ENCODE measurements at regions of chr3 and their contacts with region 1.

Region 1: DNA sequence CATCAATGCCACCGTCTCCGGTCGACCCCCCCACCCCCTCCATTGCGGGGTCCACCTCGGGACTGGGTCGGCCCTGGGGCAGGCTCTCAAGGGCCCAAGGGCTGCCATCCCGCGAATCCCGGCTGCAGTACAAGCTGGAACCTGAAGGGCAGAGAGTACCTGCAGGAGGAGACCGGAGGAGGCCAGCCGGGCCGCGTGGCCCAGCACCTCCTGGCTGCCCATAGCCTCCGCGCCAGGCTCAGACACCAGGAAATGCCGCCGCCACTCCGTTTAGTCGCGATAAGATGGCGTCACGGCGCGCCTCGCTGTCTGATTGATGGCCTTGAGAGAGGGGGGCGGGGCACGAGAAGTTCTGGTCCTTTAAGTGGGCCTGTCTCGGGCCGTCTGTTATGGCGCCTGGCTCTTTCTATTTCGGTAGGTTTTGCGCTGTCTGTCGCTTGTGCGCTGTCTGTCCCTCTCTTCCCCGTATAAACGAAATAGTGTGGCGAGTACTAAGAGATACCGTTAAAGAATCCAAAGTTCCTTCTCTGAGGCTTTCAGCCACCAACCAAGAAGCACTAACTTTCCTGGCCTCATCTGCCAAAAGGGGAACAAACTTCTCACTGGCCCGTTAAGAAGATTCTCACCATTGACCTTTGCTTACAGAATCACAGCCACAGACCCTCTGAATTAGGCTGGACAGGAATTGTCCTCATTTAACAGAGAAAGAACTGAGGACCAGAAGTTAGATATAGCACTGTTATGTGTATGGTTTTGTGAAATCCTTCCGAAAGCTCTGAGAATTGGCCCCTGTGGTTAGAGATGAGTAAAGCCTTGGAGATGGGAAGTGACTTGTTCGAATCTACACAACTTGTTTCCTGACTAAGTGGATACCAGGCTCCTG is at the start of gene RFT1:
- DNase-seq: peak; percentile 94 to 98 (median 96)
- ATAC-seq: peak; percentile 97
- H3K4me3 ChIP-seq: peak within 1 kb of the TSS; percentile 62
- H3K4me3 Mint-ChIP-seq: peak within 1 kb of the TSS; percentile 87 to 98 (median 92)
- H3K27ac ChIP-seq: peak within 1 kb of the TSS; percentile 82
- H3K27ac Mint-ChIP-seq: peak within 1 kb of the TSS; percentile 91 to 100 (median 98)
- H3K4me1 ChIP-seq: peaks cover 15 to 19% of the 10 kb centered on the region in 2 donors
- H3K4me1 Mint-ChIP-seq: peaks cover 14 to 39% (median 26%) of the 10 kb centered on the region in 7 donors
- H3K27me3 ChIP-seq: no peaks in the 10 kb centered on the region
- H3K27me3 Mint-ChIP-seq: no peaks in the 10 kb centered on the region
- total RNA-seq, gene RFT1: 16.0 to 32.0 (median 26.0) TPM

Region 2: DNA sequence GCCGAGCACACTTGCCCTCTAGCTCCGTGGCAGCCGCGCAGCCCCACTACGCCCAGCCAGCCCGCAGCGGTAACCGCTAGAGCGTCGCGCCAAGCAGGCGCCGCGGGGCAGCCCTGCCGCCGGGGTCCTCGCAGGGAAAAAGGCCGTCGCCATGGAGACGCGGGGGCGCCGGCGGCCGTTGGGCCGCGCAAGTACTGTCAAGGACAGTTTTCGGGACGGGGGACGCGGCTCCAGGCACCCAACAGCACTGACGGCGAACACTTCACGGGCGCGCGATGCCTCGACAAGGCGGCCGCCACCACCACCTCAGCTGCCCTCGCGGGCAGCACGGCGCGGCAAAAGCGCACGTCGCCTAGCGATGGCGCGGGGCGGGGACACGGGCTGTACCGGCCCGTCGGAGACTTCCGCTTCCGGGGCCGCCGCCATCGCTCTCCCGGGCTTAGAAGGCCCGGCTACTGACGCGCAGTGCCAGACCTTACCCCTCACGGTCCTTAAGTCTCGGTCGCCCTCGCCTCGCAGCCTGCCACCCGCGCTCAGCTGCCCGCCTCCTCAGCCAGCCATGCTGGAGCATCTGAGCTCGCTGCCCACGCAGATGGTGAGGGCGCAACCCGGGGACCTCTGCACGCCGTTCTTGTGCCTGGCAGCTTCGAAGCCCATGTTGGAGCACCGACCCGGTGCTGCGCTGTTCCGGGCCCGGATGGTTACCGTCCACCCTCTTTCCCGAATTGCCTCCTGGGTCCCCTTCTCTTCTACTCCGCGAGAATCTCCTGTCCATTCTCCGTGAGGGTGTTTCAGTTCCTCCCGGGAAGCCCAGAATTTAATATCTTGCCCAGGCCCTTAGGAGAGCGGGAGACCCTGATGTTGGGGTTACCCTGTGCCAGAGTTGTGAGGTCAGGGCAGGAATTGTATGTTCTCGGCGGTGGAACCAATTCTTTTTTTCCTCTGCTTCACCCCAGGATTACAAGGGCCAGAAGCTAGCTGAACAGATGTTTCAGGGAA is 424.4 kb before region 1 on chr3 and contains the starts of genes GLT8D1 and SPCS1:
- CTCF ChIA-PET with region 1: no interaction called
- POLR2A ChIA-PET with region 1: no interaction called
- intact Hi-C with region 1: loop called in 1 of 2 experiments (anchors 1 kb)
- DNase-seq: peak; percentile 83 to 96 (median 91)
- ATAC-seq: peak; percentile 94
- H3K4me3 ChIP-seq: peak within 1 kb of the TSS; percentile 97
- H3K4me3 Mint-ChIP-seq: peak within 1 kb of the TSS; percentile 89 to 96 (median 94)
- H3K27ac ChIP-seq: peak within 1 kb of the TSS; percentile 93
- H3K27ac Mint-ChIP-seq: peak within 1 kb of the TSS; percentile 90 to 97 (median 95)
- H3K4me1 ChIP-seq: peaks cover 25 to 33% of the 10 kb centered on the region in 2 donors
- H3K4me1 Mint-ChIP-seq: peaks cover 21 to 46% (median 40%) of the 10 kb centered on the region in 7 donors
- H3K27me3 ChIP-seq: no peaks in the 10 kb centered on the region
- H3K27me3 Mint-ChIP-seq: no peaks in the 10 kb centered on the region
- total RNA-seq, gene GLT8D1: 18.9 to 47.7 (median 45.2) TPM
- total RNA-seq, gene SPCS1: 55.0 to 95.3 (median 78.2) TPM

Region 3: DNA sequence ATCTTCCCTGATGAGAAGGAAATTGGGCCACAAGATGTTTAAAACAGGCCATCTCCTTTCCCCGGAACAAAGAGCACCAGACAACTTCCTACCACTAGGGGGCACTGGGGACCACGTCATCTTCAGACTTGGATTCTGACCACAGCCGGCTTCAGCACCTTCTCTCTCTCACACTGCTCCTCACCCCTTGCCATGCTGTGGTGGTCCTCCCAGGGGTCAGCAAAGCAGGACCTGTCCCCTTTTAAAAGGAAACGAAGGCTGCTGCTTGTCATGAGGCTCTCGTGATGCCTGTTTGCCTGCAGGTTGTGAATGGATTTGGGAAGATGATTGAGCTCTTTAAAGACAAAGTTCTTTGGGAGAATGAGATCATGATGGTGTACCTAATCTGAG is 16.4 kb before region 1 on chr3:
- CTCF ChIA-PET with region 1: interaction called, 11 read pairs
- POLR2A ChIA-PET with region 1: interaction called, 4 read pairs
- intact Hi-C with region 1: loop called (anchors 1 kb)
- DNase-seq: peak; percentile 53 to 86 (median 77)
- ATAC-seq: peak; percentile 83
- H3K4me3 ChIP-seq: no peak overlapping the region
- H3K4me3 Mint-ChIP-seq: no peak overlapping the region
- H3K27ac ChIP-seq: no peak overlapping the region
- H3K27ac Mint-ChIP-seq: no peak overlapping the region
- H3K4me1 ChIP-seq: peaks cover 0 to 8% of the 10 kb centered on the region in 2 donors
- H3K4me1 Mint-ChIP-seq: peaks cover 10 to 23% (median 17%) of the 10 kb centered on the region in 7 donors
- H3K27me3 ChIP-seq: no peaks in the 10 kb centered on the region
- H3K27me3 Mint-ChIP-seq: no peaks in the 10 kb centered on the region

Region 4: DNA sequence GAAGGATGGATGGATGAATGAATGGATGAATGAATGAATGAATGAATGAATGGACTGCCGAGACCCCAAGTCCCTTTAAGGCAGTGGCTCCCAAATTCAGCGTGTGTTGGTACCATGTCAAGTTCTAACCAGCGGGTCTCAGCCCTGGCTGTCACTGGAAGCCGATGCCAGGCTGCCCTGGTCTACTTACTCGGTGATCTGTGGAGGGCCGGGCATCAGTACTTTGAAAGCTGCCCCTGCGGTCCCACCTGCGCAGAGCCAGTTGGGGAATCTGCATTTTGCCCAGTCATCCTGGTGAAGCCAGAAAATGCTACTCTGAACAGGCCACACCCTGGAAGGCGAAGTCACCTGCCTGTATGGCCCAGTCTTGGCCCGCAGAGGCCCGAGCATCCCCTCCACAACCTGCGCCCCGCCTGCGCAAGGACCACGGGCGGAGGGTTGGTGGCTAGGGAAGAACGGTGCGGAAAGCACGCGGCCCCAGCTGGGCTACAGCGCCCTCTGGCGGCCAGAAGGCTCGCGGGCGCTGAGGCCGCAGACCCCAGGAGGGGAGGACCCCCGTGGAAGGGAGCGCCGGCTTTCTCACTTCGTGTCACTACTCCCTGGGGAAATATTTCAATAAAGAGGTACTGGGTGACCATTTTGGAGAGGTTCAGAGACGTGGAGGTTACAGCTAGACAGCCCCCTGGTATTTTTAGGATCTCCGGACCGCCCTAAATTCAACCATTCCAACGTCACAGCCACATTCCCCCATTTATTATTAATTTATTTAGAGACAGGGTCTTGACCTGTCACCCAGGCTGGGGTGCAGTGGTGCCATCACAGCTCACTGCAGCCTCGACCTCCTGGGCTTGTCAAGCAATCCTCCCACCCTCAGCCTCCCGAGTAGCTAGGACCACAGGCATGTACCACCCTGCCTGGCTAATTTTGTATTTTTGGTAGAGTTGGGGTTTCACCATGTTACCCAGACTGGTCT is 65.5 kb after region 1 on chr3:
- CTCF ChIA-PET with region 1: interaction called, 21 read pairs
- POLR2A ChIA-PET with region 1: interaction called, 3 read pairs
- intact Hi-C with region 1: loop called (anchors 1 kb)
- DNase-seq: peak; percentile 21 to 75 (median 55)
- ATAC-seq: peak; percentile 79
- H3K4me3 ChIP-seq: no peak overlapping the region
- H3K4me3 Mint-ChIP-seq: peak overlapping the region in 4 of 10 donors; percentile 6 to 62 (median 38)
- H3K27ac ChIP-seq: no peak overlapping the region
- H3K27ac Mint-ChIP-seq: peak overlapping the region in 1 of 9 donors; percentile 27
- H3K4me1 ChIP-seq: peaks cover 0 to 4% of the 10 kb centered on the region in 2 donors
- H3K4me1 Mint-ChIP-seq: peaks cover 5 to 12% (median 7%) of the 10 kb centered on the region in 7 donors
- H3K27me3 ChIP-seq: no peaks in the 10 kb centered on the region
- H3K27me3 Mint-ChIP-seq: peaks cover 0 to 6% (median 0%) of the 10 kb centered on the region in 5 donors

Region 5: GRCh38 chr3:53347261-53348064 is 217.0 kb after region 1 on chr3 and contains the start of gene DCP1A:
- CTCF ChIA-PET with region 1: no interaction called
- POLR2A ChIA-PET with region 1: no interaction called
- intact Hi-C with region 1: loop called (anchors 1 kb)
- DNase-seq: peak; percentile 93 to 98 (median 96)
- ATAC-seq: peak; percentile 96
- H3K4me3 ChIP-seq: peak within 1 kb of the TSS; percentile 93
- H3K4me3 Mint-ChIP-seq: peak within 1 kb of the TSS; percentile 96 to 99 (median 99)
- H3K27ac ChIP-seq: peak within 1 kb of the TSS; percentile 98
- H3K27ac Mint-ChIP-seq: peak within 1 kb of the TSS; percentile 98 to 100 (median 99)
- H3K4me1 ChIP-seq: peaks cover 6 to 21% of the 10 kb centered on the region in 2 donors
- H3K4me1 Mint-ChIP-seq: peaks cover 13 to 58% (median 42%) of the 10 kb centered on the region in 7 donors
- H3K27me3 ChIP-seq: no peaks in the 10 kb centered on the region
- H3K27me3 Mint-ChIP-seq: no peaks in the 10 kb centered on the region
- total RNA-seq, gene DCP1A: 34.0 to 51.3 (median 40.1) TPM